Prostate gland (tissue), 2 donors: ENCODE measurements at regions of chr3 and their contacts with region 1.

Region 1: DNA sequence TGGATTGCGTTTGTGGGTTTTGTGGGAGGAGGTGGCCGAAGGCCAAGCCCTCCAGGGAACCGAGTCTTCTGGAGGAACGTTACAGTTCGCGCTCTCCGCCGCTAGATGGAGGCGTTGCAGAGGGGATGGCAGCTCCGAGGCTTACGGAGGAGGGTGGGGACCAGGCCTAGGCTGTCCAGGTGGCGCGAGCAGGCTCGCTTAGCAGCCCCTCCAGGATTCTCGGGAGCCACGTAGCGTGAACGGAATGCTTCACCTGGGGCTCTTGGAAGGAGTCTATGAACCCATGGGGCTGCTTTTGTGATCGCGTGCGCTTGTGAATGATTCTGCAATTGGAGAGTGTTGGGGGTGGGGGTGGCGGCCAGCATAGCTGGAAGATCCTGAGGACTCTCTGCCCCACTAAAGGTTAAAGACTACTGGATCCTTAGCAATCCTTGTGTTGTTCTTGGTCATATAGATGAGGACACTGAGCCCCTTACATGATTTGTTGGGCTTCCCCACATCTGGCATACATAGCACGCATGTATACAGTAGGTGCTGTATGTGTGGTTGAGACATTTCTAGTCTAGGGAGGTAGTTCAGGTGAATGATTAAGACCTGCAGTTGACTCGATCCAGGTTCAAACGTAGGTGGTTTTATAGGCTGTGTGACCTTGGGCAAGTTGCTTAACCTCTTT is 25.7 kb downstream of the FAM3D start:
- DNase-seq: peak; percentile 72
- H3K4me3 ChIP-seq: no peak overlapping the region
- H3K27ac ChIP-seq: no peak overlapping the region
- H3K4me1 ChIP-seq: no peaks in the 10 kb centered on the region
- H3K27me3 ChIP-seq: no peaks in the 10 kb centered on the region
- CTCF ChIP-seq: peak; percentile 35 to 88 (median 80)
- POLR2A ChIP-seq: no peak

Region 2: GRCh38 chr3:58342676-58343075 is 298.2 kb before region 1 on chr3:
- intact Hi-C with region 1: no loop called
- DNase-seq: no peak
- H3K4me3 ChIP-seq: no peak overlapping the region
- H3K27ac ChIP-seq: no peak overlapping the region
- H3K4me1 ChIP-seq: no peaks in the 10 kb centered on the region
- H3K27me3 ChIP-seq: no peaks in the 10 kb centered on the region
- CTCF ChIP-seq: no peak
- POLR2A ChIP-seq: no peak

Region 3: GRCh38 chr3:58938057-58938456 is 297.2 kb after region 1 on chr3:
- intact Hi-C with region 1: no loop called
- DNase-seq: no peak
- H3K4me3 ChIP-seq: no peak overlapping the region
- H3K27ac ChIP-seq: no peak overlapping the region
- H3K4me1 ChIP-seq: no peaks in the 10 kb centered on the region
- H3K27me3 ChIP-seq: no peaks in the 10 kb centered on the region
- CTCF ChIP-seq: no peak
- POLR2A ChIP-seq: no peak

Region 4: GRCh38 chr3:59049671-59050331 is 409.0 kb after region 1 on chr3 and contains the start of gene CFAP20DC:
- intact Hi-C with region 1: loop called (anchors 5 kb)
- DNase-seq: peak; percentile 70
- H3K4me3 ChIP-seq: peak within 1 kb of the TSS; percentile 50 to 52
- H3K27ac ChIP-seq: peak within 1 kb of the TSS in 1 of 2 donors; percentile 48
- H3K4me1 ChIP-seq: no peaks in the 10 kb centered on the region
- H3K27me3 ChIP-seq: no peaks in the 10 kb centered on the region
- CTCF ChIP-seq: peak in 1 of 4 experiments; percentile 8
- POLR2A ChIP-seq: peak; percentile 51
- total RNA-seq, gene CFAP20DC: 0.36 to 8.3 TPM

Region 5: DNA sequence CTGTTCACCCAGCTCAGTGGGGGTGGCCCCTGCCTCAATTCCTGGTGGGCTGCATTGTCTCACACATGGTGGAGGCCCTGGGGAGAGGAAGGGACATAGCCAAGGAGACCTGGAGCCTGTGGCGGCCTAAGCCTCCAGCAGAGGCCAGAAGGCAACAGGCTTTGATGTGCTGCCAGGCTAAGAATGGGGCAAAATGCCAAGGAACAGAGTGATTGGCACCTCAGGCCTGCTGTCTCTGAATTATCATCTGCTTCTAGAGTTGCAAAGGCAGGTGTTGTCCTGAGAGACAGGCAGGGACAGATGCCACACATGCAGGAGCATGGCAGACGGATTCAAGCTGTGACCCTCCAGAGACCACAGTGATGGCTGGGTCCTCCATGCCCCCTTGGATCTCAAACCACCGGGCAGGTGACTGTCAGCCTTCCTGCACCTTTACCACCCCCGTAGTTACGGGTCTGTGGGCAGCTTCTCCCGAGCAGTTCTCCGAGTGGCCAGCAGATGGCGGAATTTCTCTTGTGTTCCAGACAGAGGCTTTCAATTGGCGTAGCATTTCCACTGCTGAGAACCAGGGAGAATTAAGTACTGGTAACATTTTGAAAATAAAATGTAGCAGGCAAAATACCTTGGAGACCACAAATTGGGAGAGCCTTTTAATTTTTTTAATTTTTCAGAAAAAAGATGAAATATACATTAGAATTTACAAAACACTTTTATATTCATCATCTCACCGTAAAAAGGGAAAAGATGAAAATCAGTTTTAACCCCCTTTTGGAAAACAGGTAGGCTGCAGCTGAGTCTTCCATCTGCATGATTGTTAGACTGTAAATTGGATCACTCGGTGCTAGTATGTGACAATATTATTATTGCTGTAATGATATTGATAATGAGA is 934.5 kb after region 1 on chr3:
- intact Hi-C with region 1: loop called (anchors 10 kb)
- DNase-seq: peak; percentile 89
- H3K4me3 ChIP-seq: no peak overlapping the region
- H3K27ac ChIP-seq: no peak overlapping the region
- H3K4me1 ChIP-seq: no peaks in the 10 kb centered on the region
- H3K27me3 ChIP-seq: no peaks in the 10 kb centered on the region
- CTCF ChIP-seq: peak; percentile 92 to 94 (median 93)
- POLR2A ChIP-seq: no peak